Panc1 (cell line): ENCODE measurements at regions of chr7 and their contacts with region 1.

Region 1: DNA sequence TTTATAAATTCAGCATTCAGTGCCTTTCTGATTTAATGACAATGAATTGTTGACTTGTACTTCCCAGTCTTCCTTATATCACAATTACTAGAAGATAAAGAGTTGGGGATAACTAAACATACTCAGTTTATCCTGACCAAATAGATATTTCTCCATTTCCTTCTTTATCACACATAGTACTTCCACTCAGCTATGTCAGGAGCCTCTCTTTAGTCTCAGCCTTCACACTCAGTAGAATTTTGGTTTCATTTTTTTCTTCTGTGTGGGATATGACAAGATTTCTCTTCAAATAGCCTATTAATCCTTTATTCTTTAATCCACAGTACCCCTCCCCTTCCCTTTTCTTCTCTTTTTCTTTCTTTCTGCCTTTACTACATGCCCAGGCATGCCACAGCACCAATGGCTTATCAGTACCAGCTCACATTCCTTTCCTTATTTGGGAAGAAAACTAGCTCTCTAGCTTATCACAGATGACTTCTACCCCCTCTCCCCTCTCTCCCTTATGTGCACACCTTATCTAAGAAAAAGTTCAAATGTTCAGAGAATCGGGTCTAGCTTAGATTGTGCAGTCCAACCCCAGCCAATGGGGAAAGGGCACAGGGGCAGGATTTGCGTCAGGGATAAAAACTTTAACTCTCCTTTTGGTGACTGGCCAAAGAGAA is 109.0 kb downstream of the PHF14 start:
- DNase-seq: no peak
- ATAC-seq: no peak
- H3K4me3 ChIP-seq: no peak overlapping the region
- H3K27ac ChIP-seq: no peak overlapping the region
- H3K4me1 ChIP-seq: no peaks in the 10 kb centered on the region
- H3K27me3 ChIP-seq: no peaks in the 10 kb centered on the region
- CTCF ChIP-seq: no peak

Region 2: DNA sequence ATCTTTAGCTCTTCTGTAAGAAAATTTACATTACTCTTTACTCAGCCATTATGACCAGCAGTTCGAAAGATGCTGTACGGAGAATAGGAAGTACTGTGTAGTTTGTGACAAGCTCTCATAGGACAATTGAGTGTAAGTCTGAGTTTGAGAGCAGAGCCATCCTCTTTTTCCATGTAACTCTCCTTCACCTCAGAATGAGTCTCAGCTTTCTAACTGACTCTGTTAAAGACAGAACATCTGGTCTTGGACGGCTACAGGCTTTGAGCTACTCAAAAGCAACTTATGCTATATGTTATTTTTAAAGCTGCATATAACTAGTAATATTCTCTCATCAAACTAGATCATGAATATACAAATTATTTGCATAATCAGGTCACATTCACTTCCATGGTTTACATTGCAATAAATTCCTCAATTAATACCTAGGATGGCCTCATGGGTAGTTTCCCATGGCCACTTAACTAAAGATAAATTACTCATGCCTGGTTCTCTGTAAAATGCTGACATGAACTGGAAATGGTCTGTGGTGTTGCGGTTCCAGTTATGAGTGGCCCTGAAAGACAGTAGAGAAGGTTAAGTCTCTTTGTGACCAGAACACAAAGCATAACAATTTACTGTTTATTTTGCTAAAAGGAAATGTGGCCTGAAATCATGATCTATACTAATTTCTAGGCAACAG is 249.6 kb after region 1 on chr7:
- CTCF ChIA-PET with region 1: no interaction called
- POLR2A ChIA-PET with region 1: interaction called, 12 read pairs
- in situ Hi-C with region 1: no loop called
- intact Hi-C with region 1: no loop called
- DNase-seq: no peak
- ATAC-seq: no peak
- H3K4me3 ChIP-seq: no peak overlapping the region
- H3K27ac ChIP-seq: no peak overlapping the region
- H3K4me1 ChIP-seq: no peaks in the 10 kb centered on the region
- H3K27me3 ChIP-seq: peaks cover 10% of the 10 kb centered on the region
- CTCF ChIP-seq: no peak